HepG2 (cell line): ENCODE measurements at regions of chr16 and their contacts with region 1.

Region 1: DNA sequence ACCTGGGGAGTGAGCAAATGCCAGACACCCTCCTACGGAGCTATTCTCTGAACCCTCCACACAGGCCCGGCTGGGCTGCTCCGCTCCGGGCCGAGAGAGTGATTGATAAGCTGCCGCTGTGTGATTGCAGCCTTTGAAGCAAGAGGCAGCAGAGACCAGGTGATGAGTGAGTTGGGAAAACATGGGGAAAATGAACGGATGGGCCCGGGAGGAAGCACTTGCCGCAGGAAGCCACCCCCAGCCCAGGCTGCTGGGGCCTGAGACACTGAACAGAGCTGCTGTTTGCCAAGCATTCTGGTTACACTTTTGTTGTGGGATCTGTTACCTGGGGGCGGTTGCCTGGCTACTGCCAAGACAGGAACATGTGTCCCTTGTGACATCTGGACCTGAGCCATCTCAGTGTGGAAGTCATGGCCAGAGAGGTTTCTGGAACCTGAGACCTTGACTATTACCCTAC is 46.4 kb upstream of the KLHDC4 start:
- DNase-seq: peak; percentile 68
- ATAC-seq: peak; percentile 70
- H3K4me3 ChIP-seq: peak overlapping the region in 1 of 3 experiments; percentile 41; a peak in 1 of 6 replicates
- H3K27ac ChIP-seq: no peak overlapping the region
- H3K4me1 ChIP-seq: peaks cover 72% of the 10 kb centered on the region
- H3K27me3 ChIP-seq: no peaks in the 10 kb centered on the region
- CTCF ChIP-seq: peak; percentile 68
- EP300 ChIP-seq: no peak
- POLR2A ChIP-seq: no peak
- RAD21 ChIP-seq: peak; percentile 73

Region 2: GRCh38 chr16:87847785-87848675 is 35.8 kb after region 1 on chr16:
- CTCF ChIA-PET with region 1: interaction called, 3 read pairs
- POLR2A ChIA-PET with region 1: interaction called, 16 read pairs
- in situ Hi-C with region 1: no loop called
- intact Hi-C with region 1: loop called (anchors 2 kb)
- DNase-seq: peak; percentile 99
- ATAC-seq: peak; percentile 85
- H3K4me3 ChIP-seq: peak overlapping the region in 2 of 3 experiments; percentile 2 to 64; a peak in 2 of 6 replicates
- H3K27ac ChIP-seq: peak overlapping the region; percentile 98
- H3K4me1 ChIP-seq: peaks cover 99% of the 10 kb centered on the region
- H3K27me3 ChIP-seq: no peaks in the 10 kb centered on the region
- CTCF ChIP-seq: peak; percentile 65
- EP300 ChIP-seq: peak; percentile 86 to 89
- POLR2A ChIP-seq: peak in 1 of 2 experiments; percentile 74; a peak in 2 of 4 replicates
- RAD21 ChIP-seq: peak; percentile 64